Activated B cell treated with CpG ODN at 0.5 μM for 24 hours (primary cell): ENCODE measurements at regions of chr1 and their contacts with region 1.

Region 1: DNA sequence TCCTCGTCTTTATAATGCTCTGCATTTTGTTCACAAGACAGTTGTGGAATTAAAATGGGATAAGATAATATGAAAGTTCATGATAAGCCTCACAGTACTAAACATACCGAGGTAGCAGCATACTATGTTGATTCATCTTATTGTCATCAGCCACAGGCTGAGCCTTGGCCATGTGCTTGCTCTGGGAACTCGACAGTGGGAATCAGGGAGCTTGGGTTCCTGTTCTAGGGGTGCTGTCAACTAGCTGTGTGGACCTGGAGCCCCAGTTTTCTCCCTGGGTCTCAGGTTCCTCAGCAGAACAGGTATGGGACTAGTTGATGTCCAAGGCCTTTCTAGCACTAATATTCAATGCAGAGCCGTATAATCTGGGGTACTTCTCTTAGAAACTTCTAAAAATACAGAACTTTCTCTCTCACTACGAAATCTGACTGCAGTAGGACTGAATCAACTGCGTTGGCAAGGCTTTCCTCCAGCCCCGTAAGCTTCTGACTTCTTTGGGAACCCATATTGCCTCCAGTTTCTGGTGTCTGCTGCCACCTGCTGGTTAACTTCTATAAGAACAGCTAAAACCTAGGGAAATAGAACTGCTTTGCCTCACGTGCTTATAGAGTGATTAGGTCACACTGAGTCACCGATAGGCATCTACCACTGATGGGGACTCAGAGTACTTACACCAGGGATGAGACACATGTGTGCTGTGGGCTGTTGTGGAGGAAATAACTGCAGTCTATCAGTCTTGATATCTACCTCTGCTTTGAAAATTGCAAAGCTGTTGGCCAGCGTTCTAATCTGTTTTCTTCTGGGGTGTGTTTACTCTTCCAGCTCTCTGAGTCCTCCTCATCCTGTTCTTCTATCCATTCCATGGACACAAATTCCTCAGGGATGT is 110.9 kb downstream of the RGL1 start:
- DNase-seq: no peak
- ATAC-seq: peak; percentile 57
- H3K4me3 Mint-ChIP-seq: no peak overlapping the region
- H3K27ac Mint-ChIP-seq: peak overlapping the region; percentile 0
- H3K4me1 Mint-ChIP-seq: peaks cover 36% of the 10 kb centered on the region
- H3K27me3 Mint-ChIP-seq: no peaks in the 10 kb centered on the region
- CTCF ChIP-seq: peak; percentile 60

Region 2: DNA sequence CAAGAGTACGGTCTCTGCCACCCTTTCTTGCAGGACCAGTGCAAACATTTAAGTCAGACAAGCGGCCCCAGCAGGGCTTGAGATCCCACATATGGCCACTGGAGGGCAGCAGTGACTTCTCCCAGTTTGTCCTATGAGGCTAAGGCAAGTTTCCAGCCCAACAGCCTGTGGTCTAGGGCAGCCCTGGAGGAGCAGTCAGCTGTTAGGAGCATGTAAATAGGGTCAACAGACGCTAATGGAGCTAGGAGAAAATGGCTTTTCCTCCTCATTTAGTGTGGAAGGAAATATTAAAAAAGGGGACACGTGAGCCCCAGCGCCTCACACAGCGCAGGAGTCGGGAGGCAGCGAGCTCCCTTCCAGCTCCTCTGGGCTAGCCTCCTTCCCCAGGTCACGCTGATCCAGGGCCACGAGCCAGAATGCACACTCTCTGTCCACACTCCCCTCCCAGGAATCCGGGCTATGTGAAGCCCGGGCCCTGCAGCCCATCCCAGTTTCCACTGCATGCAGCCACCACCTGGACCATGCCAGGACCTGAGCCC is 634.2 kb before region 1 on chr1:
- CTCF ChIA-PET with region 1: interaction called, 3 read pairs
- POLR2A ChIA-PET with region 1: no interaction called
- intact Hi-C with region 1: loop called (anchors 1 kb)
- DNase-seq: peak; percentile 57
- ATAC-seq: peak; percentile 67
- H3K4me3 Mint-ChIP-seq: no peak overlapping the region
- H3K27ac Mint-ChIP-seq: no peak overlapping the region
- H3K4me1 Mint-ChIP-seq: no peaks in the 10 kb centered on the region
- H3K27me3 Mint-ChIP-seq: peaks cover 17% of the 10 kb centered on the region
- CTCF ChIP-seq: peak; percentile 63

Region 3: DNA sequence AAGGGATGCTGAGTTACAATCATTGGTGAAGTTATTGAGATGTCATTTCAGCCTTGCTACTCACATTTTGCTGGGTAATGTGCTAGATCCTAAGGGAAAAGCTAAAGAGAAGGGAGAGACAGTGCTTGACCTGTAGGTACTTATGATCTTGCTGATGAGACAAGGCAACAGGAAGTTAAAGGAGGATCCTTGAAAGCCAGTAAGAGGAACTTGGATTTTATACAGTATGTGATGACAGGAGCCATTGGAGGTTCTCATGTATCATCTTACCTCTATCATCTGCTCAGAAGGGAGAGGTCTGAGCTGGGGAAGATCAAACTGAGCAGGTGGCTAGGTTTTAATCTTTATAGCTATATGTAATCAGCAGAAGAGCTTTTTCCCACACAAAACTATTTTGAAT is 269.1 kb before region 1 on chr1:
- CTCF ChIA-PET with region 1: interaction called, 284 read pairs
- POLR2A ChIA-PET with region 1: no interaction called
- intact Hi-C with region 1: no loop called
- DNase-seq: no peak
- ATAC-seq: no peak
- H3K4me3 Mint-ChIP-seq: no peak overlapping the region
- H3K27ac Mint-ChIP-seq: no peak overlapping the region
- H3K4me1 Mint-ChIP-seq: no peaks in the 10 kb centered on the region
- H3K27me3 Mint-ChIP-seq: peaks cover 16% of the 10 kb centered on the region
- CTCF ChIP-seq: no peak

Region 4: GRCh38 chr1:183739741-183740271 is 176.1 kb before region 1 on chr1:
- CTCF ChIA-PET with region 1: interaction called, 6 read pairs
- POLR2A ChIA-PET with region 1: no interaction called
- intact Hi-C with region 1: loop called (anchors 2 kb)
- DNase-seq: no peak
- ATAC-seq: no peak
- H3K4me3 Mint-ChIP-seq: no peak overlapping the region
- H3K27ac Mint-ChIP-seq: no peak overlapping the region
- H3K4me1 Mint-ChIP-seq: no peaks in the 10 kb centered on the region
- H3K27me3 Mint-ChIP-seq: peaks cover 12% of the 10 kb centered on the region
- CTCF ChIP-seq: no peak

Region 5: GRCh38 chr1:183896466-183897048 is 19.3 kb before region 1 on chr1:
- CTCF ChIA-PET with region 1: interaction called, 25 read pairs
- POLR2A ChIA-PET with region 1: interaction called, 23 read pairs
- intact Hi-C with region 1: loop called (anchors 1 kb)
- DNase-seq: no peak
- ATAC-seq: peak; percentile 31
- H3K4me3 Mint-ChIP-seq: no peak overlapping the region
- H3K27ac Mint-ChIP-seq: peak overlapping the region; percentile 47
- H3K4me1 Mint-ChIP-seq: peaks cover 31% of the 10 kb centered on the region
- H3K27me3 Mint-ChIP-seq: peaks cover 2% of the 10 kb centered on the region
- CTCF ChIP-seq: no peak

Region 6: DNA sequence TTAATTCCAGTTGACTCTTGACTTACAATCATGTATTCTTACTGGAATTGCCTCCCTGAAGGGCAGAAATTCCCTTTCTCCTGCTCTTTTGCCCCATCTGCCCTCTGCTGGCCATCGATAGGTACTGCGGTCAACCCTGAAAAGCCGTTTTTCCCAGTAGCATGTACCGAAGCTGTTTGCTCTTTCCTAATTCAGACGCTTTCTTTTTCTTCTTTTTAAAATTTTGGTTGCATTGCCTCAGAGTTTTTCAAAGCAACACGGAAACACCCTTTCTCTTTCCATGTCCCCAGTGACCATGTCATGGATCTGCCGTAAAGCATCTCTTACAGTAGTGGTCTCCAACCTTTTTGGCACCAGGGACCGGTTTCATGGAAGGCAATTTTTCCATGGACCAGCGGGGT is 306.8 kb after region 1 on chr1:
- CTCF ChIA-PET with region 1: interaction called, 4 read pairs
- POLR2A ChIA-PET with region 1: no interaction called
- intact Hi-C with region 1: loop called (anchors 1 kb)
- DNase-seq: no peak
- ATAC-seq: no peak
- H3K4me3 Mint-ChIP-seq: no peak overlapping the region
- H3K27ac Mint-ChIP-seq: no peak overlapping the region
- H3K4me1 Mint-ChIP-seq: no peaks in the 10 kb centered on the region
- H3K27me3 Mint-ChIP-seq: no peaks in the 10 kb centered on the region
- CTCF ChIP-seq: no peak